ENCODE measurements at regions of chr1 and their contacts with region 1.

Region 1: DNA sequence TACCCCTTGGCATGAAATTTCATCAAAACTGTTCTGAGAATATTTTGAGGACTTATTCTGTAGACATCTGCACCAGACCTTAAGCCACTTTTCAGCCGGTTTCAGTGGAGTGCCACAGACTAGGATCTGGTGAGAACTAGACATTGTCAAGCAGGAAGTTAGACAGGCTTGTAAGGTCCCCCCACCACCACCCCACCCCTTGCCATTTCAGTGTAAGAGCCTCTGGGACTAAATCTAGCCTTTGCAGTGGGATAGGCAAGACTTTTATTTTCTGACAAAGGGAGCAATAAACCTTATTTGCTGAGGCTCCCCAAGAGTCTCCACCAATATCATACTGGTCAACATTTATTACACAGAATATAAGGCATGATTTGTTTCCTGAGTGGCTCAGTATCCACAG is 77.9 kb upstream of the EXO1 start:
- DNase-seq: no peak
- H3K4me3 ChIP-seq: no peak overlapping the region
- H3K27ac ChIP-seq: no peak overlapping the region
- H3K4me1 ChIP-seq: no peaks in the 10 kb centered on the region
- H3K27me3 ChIP-seq: peaks cover 2% of the 10 kb centered on the region
- CTCF ChIP-seq: no peak

Region 2: DNA sequence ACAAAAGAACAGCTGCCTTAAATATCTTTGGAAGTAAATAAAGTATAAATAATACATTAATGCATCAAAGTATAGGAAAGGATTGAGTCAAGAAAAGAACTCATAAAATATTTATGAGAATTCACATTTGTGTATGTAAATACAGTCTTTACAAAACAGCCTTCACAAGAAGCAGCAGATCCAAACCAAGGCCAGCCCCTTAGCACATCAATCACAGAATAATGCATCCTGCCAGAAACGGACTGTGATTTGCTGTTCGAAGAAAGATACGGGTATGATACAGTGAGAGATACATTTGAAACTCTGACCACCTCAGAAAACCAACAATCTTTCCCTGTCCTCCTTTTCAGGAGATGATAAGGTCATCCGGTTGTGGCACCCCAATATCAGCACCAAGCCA is 47.2 kb before region 1 on chr1:
- CTCF ChIA-PET with region 1: no interaction called
- dilution Hi-C with region 1: no loop called
- in situ Hi-C with region 1: no loop called
- intact Hi-C with region 1: loop called (anchors 10 kb)
- DNase-seq: no peak
- H3K4me3 ChIP-seq: no peak overlapping the region
- H3K27ac ChIP-seq: no peak overlapping the region
- H3K4me1 ChIP-seq: no peaks in the 10 kb centered on the region
- H3K27me3 ChIP-seq: no peaks in the 10 kb centered on the region
- CTCF ChIP-seq: no peak

Measured in mammary epithelial cell (primary cell).